ENCODE measurements at regions of chr3 and their contacts with region 1.

Region 1: DNA sequence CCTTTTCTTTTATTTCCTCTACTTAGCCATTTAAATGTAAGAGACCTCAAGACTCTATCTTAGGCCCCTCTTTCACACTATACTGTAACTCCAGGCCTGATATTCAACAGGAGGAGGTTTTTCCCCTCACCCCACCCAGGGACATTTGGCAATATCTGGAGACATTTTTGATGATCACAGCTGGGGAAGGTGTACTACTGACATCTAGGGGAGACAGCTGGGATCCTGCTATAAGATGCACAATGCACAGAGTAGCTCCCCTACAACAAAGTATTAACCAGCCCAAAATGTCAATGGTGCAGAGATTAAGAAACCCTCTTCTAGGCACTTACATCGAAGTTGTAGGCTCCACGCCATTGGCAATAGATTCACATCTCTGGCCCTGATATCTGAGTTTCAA is 517.5 kb upstream of the UBE2E2 start:
- DNase-seq: peak; percentile 45
- H3K4me3 Mint-ChIP-seq: no peak overlapping the region
- H3K27ac Mint-ChIP-seq: no peak overlapping the region
- H3K4me1 Mint-ChIP-seq: no peaks in the 10 kb centered on the region
- H3K27me3 Mint-ChIP-seq: no peaks in the 10 kb centered on the region
- CTCF ChIP-seq: peak; percentile 57

Region 2: GRCh38 chr3:22565393-22565792 is 120.2 kb before region 1 on chr3:
- CTCF ChIA-PET with region 1: interaction called, 8 read pairs
- POLR2A ChIA-PET with region 1: no interaction called
- intact Hi-C with region 1: loop called (anchors 1 kb)
- DNase-seq: no peak
- H3K4me3 Mint-ChIP-seq: no peak overlapping the region
- H3K27ac Mint-ChIP-seq: no peak overlapping the region
- H3K4me1 Mint-ChIP-seq: peaks cover 5% of the 10 kb centered on the region
- H3K27me3 Mint-ChIP-seq: no peaks in the 10 kb centered on the region
- CTCF ChIP-seq: no peak

Region 3: GRCh38 chr3:22609139-22609538 is 76.5 kb before region 1 on chr3:
- CTCF ChIA-PET with region 1: no interaction called
- POLR2A ChIA-PET with region 1: no interaction called
- intact Hi-C with region 1: no loop called
- DNase-seq: no peak
- H3K4me3 Mint-ChIP-seq: no peak overlapping the region
- H3K27ac Mint-ChIP-seq: no peak overlapping the region
- H3K4me1 Mint-ChIP-seq: no peaks in the 10 kb centered on the region
- H3K27me3 Mint-ChIP-seq: no peaks in the 10 kb centered on the region
- CTCF ChIP-seq: no peak

Measured in MCF 10A (cell line).